Ascending aorta (tissue), 2 donors: ENCODE measurements at regions of chr16 and their contacts with region 1.

Region 1: GRCh38 chr16:2867987-2868789 is 10.2 kb upstream of the PRSS22 start:
- DNase-seq: peak; percentile 82 to 98
- H3K4me3 ChIP-seq: peak overlapping the region; percentile 67 to 77
- H3K27ac ChIP-seq: peak overlapping the region; percentile 87 to 93
- H3K4me1 ChIP-seq: no peaks in the 10 kb centered on the region
- H3K27me3 ChIP-seq: no peaks in the 10 kb centered on the region
- CTCF ChIP-seq: peak; percentile 94 to 98 (median 94)

Region 2: DNA sequence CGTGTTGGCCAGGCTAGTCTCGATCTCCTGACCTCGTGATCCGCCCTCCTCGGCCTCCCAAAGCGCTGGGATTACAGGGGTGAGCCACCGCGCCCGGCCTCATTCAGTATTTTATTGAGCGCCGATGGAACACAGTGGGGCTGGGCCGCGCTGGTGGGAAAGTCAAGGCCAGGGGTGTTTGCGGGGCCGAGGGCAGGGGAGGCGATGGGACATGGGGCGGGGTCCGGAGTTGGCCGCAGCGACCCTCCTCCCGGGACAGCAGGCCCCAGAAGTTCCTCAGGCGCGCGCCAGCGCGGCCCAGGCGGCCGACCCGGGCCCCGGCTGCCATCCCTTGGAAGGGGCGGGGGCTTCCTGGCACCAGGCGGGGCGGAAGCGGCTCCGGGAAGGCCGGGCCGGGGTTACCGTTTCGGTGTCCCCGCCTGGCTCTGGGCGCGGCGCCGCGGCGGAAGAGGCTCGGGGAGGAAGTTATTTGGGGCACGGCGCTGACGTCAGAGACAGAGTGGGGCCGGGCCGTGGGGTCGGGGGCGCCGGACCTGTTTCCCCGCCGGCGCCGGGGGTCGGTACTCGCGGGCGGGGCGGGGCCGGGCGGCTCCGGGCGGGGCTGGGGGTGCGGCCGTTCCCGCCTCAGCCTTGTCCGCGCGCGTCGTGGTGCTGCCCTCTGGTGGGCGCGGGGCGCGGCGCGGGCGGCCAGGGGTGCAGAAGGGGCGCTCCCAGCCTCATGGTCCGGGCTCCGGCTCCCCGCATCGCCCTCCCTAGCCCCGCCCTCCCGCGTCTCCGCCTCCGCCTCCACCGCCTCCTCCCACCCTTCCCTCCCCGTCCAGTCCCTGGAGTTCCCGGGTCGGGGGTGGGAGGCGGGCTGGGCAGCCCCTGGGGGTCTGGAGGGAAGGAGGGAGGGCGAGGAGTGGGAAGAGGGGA is 147.2 kb before region 1 on chr16:
- intact Hi-C with region 1: loop called (anchors 1 kb)
- DNase-seq: peak; percentile 20 to 91
- H3K4me3 ChIP-seq: peak overlapping the region; percentile 79 to 80
- H3K27ac ChIP-seq: peak overlapping the region; percentile 57 to 75
- H3K4me1 ChIP-seq: peaks cover 0 to 8% of the 10 kb centered on the region in 2 donors
- H3K27me3 ChIP-seq: no peaks in the 10 kb centered on the region
- CTCF ChIP-seq: peak; percentile 54 to 67 (median 56)

Region 3: DNA sequence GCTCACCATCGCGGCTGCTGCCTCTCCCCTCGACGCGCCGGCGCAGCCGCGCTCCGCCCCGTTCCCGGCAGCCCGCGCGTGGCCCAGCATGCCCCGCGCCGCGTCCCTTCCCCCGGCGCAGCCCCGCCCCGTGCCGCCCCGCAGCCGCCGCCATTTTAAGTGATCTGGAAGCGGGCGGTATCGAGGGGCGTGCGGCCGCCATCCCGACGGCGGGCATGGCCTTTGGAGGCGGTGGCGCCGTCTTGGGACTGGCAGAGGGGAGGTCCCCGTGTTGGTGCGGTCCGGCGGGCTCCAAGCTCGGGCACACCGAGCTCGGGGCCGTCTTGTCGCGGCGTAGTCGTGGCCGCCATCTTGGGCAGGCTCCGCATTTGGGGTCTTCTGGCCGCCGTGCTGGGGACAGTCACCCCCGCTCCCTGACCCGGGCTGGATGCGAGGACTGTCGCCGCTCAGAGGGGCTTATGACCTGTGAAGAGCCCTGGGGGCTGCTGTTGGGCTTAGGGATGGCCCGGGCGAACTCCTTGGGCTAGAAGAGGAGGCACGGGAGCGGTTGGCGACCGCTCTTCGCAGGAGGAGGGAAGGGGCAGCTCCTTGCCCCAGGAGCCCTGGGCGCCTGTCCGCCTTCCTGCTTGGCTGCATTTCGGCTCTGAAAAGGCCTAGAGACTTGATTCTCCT is 90.8 kb before region 1 on chr16 and contains the start of gene ELOB:
- intact Hi-C with region 1: loop called (anchors 5 kb)
- DNase-seq: peak; percentile 57 to 92
- H3K4me3 ChIP-seq: peak within 1 kb of the TSS; percentile 91 to 100
- H3K27ac ChIP-seq: peak within 1 kb of the TSS; percentile 99 to 100
- H3K4me1 ChIP-seq: peaks cover 9 to 17% of the 10 kb centered on the region in 2 donors
- H3K27me3 ChIP-seq: no peaks in the 10 kb centered on the region
- CTCF ChIP-seq: no peak
- total RNA-seq, gene ELOB: 1,184 TPM

Region 4: GRCh38 chr16:2883027-2883851 is 15.1 kb after region 1 on chr16 and contains the start of gene FLYWCH2:
- intact Hi-C with region 1: loop called (anchors 1 kb)
- DNase-seq: peak; percentile 96 to 99
- H3K4me3 ChIP-seq: peak within 1 kb of the TSS; percentile 64 to 86
- H3K27ac ChIP-seq: peak within 1 kb of the TSS; percentile 91 to 94
- H3K4me1 ChIP-seq: peaks cover 0 to 5% of the 10 kb centered on the region in 2 donors
- H3K27me3 ChIP-seq: no peaks in the 10 kb centered on the region
- CTCF ChIP-seq: peak in 1 of 3 experiments; percentile 35
- total RNA-seq, gene FLYWCH2: 109 TPM